Activated CD4-positive, alpha-beta memory T cell treated with anti-CD3 and anti-CD28 coated beads for 36 hours (primary cell): ENCODE measurements at regions of chr1 and their contacts with region 1.

Region 1: DNA sequence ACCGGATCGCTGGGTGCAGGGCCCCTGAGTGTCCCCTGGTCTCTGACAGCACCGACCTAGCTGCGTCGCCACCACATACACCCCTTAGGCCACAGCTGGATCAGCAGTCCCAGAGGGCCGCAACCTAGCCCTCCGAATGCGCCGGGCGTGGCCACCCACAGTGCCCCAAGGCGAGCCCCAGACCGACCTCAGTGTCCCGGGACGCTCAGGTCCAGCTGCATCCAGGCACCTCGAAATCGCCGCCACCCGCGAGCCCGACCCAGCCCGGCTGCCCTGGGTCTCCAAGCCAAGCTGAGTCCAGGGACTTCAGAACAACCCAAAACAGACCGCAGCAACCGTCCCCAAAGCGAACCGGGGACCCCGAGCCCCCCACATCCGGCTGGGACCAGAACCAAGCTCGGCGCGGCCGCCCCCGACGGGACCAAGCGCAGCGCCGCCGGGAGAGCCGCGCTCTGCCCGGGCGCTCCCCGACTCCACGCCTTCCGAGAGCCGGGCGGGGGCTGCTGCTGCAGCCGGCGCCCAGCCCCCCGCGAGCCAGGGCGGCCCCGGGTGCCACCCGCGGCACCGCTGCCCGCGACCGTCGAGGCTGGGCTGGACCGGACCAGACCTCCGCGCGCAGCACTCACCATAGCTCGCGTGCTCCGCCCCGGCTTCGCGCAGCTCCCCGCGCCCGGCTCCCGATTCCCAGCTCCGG is 54.6 kb upstream of the ECE1 start:
- DNase-seq: peak; percentile 45
- H3K4me3 Mint-ChIP-seq: peak overlapping the region; percentile 91
- H3K27ac Mint-ChIP-seq: peak overlapping the region; percentile 94
- H3K4me1 Mint-ChIP-seq: peaks cover 40% of the 10 kb centered on the region
- H3K27me3 Mint-ChIP-seq: no peaks in the 10 kb centered on the region

Region 2: DNA sequence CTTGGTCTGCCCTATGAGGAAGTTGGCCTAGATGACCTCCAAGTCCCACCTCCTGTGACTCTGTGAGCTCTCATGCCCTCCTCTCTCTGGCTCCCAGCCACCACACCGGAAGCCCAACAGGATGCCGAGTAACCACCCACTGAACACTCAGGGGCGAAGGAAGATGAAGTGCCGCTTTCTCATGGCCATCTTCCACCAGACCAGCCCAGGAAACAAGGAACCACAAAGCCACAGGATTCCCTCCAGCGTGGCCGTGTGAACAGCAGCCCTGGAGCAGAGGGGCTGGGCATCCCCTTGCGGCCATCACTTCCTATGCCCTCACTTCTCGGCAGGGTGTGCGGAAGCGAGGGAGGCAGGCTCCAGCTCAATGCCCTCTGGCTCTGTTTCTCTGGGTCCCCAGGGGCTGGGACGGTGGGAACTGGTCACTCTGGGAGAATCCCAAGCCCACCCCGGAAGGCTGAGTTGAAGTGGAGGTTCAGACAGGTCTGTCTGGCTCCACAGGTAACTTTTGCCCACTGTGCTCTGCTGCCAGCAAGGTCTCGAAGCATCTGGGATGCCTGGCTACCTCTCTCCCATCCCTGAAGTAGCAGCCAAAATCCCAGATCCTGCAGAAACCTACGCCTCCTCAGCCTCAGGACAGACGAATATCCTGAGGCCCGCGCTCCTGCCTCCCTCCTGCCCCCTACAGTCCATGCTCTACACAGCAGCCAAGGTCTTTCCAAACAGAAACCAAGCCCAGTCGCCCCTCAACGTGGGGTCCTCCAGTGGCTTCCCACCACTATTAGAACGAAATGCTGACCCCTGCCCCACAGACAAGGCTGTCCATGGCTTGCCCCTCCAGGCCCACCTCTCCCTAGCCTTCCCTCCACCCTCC is 10.4 kb before region 1 on chr1:
- CTCF ChIA-PET with region 1: interaction called, 19 read pairs
- POLR2A ChIA-PET with region 1: interaction called, 14 read pairs
- intact Hi-C with region 1: loop called (anchors 1 kb)
- DNase-seq: peak; percentile 89
- H3K4me3 Mint-ChIP-seq: peak overlapping the region; percentile 83
- H3K27ac Mint-ChIP-seq: peak overlapping the region; percentile 98
- H3K4me1 Mint-ChIP-seq: peaks cover 88% of the 10 kb centered on the region
- H3K27me3 Mint-ChIP-seq: no peaks in the 10 kb centered on the region

Region 3: DNA sequence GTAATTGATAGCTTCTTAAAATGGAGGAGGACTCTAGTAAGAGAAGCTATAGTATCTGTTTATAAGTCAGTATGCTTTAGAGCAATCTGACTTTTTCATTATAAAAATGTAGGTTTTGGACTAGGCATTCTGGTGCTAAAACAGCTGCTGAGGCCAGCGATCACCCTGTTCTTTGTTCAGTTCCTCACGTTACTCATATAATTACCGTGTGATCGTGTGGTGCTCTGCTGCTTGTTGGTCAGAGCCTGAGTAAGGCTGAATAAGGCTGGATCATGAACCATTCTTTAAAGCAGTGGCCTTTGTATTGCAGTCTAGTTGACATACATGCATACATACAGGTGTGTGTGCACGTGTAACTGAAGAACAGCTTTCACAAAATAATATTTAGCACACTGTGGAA is 732.8 kb after region 1 on chr1:
- CTCF ChIA-PET with region 1: no interaction called
- POLR2A ChIA-PET with region 1: no interaction called
- intact Hi-C with region 1: no loop called
- DNase-seq: no peak
- H3K4me3 Mint-ChIP-seq: no peak overlapping the region
- H3K27ac Mint-ChIP-seq: peak overlapping the region; percentile 58
- H3K4me1 Mint-ChIP-seq: peaks cover 83% of the 10 kb centered on the region
- H3K27me3 Mint-ChIP-seq: no peaks in the 10 kb centered on the region